PC-9 (cell line): ENCODE measurements at regions of chr6 and their contacts with region 1.

Region 1: GRCh38 chr6:112087136-112087911 is at the starts of genes FAM229B and TUBE1:
- DNase-seq: peak; percentile 86 to 97
- H3K4me3 ChIP-seq: peak within 1 kb of the TSS; percentile 72
- H3K27ac ChIP-seq: peak within 1 kb of the TSS; percentile 53
- H3K4me1 ChIP-seq: peaks cover 17% of the 10 kb centered on the region
- H3K27me3 ChIP-seq: no peaks in the 10 kb centered on the region
- CTCF ChIP-seq: no peak
- total RNA-seq, gene FAM229B: 12.3 and 16.3 TPM in 2 replicates
- total RNA-seq, gene TUBE1: 27.0 and 30.3 TPM in 2 replicates

Region 2: GRCh38 chr6:112372226-112372806 is 285.0 kb after region 1 on chr6:
- CTCF ChIA-PET with region 1: no interaction called
- POLR2A ChIA-PET with region 1: no interaction called
- intact Hi-C with region 1: loop called (anchors 10 kb)
- DNase-seq: peak in 1 of 2 experiments; percentile 51
- H3K4me3 ChIP-seq: no peak overlapping the region
- H3K27ac ChIP-seq: no peak overlapping the region
- H3K4me1 ChIP-seq: no peaks in the 10 kb centered on the region
- H3K27me3 ChIP-seq: no peaks in the 10 kb centered on the region
- CTCF ChIP-seq: peak; percentile 90

Region 3: DNA sequence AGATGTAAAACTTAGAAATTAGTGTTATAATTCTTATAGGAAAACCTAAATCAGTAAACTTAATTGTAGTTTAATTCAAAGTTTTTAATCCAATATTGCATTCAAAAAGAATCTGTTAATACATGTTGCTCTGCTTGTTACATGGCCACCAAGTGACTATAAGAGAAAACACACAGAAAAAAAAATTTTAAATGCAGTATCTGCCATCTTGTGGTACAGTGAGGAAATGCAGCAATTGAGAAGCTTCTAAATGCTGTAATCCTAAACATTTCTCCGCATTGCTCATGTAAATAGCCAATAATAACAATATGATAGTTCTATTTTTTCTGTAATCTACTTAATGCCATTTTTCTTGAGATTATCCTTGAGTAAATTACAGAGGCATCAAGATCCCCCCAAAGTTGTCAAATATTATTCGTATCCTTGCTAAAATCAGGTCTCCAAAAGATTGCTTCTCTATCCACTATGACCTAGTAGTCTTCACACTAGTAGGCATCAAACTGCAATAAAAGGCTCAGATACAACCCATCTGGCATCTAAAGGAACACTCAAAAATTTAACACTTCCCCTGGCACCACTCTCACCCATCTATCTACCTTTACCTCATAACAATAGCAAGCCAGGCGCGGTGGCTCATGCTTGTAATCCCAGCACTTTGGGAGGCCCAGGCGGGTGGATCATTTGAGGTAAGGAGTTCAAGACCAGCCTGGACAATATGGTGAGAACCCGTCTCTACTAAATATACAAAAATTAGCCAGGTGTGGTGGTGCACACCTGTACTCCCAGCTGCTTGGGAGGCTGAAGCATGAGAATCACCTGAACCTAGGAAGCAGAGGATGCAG is 1849.0 kb after region 1 on chr6:
- CTCF ChIA-PET with region 1: no interaction called
- POLR2A ChIA-PET with region 1: no interaction called
- intact Hi-C with region 1: loop called (anchors 5 kb)
- DNase-seq: peak; percentile 7 to 69
- H3K4me3 ChIP-seq: no peak overlapping the region
- H3K27ac ChIP-seq: no peak overlapping the region
- H3K4me1 ChIP-seq: no peaks in the 10 kb centered on the region
- H3K27me3 ChIP-seq: no peaks in the 10 kb centered on the region
- CTCF ChIP-seq: peak; percentile 99